ENCODE measurements at regions of chr11 and their contacts with region 1.

Region 1: DNA sequence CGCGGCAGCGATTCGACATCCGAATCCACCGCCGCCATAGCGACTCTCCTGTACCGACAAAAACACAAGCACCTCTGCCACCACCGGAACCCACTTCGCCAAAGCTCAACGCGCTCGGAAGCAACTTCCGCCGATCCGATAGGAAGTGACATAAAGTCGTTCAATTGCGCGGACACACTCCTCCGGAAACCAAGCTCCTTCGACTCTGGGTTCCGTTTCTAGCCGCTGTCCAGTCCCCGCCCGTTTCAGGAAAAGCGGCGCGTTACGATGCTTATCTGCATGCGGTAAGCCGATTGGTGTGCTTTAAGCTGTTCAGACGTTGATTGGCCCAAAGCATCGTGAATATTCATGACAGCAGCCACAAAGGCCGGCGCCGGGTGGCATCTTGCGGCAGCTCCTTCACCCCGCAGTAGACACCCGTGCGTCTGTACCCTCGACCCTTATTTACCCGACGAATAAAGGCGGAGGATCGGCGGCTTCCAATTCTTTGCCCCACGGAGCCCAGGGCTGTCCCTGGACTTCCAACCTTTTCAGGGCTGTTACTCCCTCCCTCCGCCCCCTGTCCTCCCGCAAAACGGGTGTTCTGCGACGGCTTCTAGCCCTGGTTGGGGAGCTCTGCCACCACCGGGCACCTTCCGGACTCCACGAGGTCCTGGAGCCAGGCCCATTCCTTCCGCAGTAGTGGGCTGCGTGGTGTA is at the start of gene TUT1:
- DNase-seq: peak; percentile 91
- CTCF ChIP-seq: no peak

Region 2: DNA sequence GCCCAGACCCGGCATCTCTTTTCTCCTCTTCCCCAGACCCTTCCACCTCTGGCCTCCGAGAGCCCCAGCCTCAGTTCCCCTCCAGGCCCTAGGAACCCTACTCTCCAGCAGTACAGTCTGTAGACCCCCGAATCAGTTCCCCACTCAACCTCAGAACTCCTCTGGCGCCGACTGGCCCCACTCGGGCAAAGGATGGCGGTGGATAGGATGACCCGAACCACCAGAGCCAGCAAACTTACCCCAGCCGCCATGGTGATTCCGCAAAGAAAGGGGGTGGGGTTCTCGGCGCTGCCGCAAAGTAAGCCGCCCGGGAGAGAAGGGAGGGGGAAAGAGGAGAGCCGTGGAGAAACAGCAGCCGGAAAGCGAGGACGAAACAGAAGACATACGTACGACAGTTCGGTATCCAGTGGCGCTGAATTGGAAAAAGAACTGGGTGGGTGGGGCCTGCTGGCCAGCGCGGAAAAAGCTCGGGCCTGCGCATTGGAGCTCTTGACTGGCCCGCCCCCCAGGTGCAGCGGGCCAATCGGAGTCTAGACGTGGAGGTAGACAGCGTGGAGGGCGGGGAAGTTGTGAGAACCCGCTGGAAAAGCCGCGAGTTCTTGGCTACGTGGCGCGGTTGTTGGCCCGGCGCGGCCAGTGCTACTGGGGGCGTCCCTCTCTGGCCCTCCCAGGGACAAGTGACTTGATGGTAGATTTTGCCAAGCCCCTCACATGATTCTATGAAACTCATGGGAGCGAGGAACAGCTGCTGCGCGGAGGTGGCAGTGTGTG is 17.8 kb before region 1 on chr11 and contains the start of gene EEF1G:
- CTCF ChIA-PET with region 1: interaction called, 7 read pairs
- POLR2A ChIA-PET with region 1: interaction called, 87 read pairs
- DNase-seq: peak; percentile 99
- CTCF ChIP-seq: no peak

Region 3: DNA sequence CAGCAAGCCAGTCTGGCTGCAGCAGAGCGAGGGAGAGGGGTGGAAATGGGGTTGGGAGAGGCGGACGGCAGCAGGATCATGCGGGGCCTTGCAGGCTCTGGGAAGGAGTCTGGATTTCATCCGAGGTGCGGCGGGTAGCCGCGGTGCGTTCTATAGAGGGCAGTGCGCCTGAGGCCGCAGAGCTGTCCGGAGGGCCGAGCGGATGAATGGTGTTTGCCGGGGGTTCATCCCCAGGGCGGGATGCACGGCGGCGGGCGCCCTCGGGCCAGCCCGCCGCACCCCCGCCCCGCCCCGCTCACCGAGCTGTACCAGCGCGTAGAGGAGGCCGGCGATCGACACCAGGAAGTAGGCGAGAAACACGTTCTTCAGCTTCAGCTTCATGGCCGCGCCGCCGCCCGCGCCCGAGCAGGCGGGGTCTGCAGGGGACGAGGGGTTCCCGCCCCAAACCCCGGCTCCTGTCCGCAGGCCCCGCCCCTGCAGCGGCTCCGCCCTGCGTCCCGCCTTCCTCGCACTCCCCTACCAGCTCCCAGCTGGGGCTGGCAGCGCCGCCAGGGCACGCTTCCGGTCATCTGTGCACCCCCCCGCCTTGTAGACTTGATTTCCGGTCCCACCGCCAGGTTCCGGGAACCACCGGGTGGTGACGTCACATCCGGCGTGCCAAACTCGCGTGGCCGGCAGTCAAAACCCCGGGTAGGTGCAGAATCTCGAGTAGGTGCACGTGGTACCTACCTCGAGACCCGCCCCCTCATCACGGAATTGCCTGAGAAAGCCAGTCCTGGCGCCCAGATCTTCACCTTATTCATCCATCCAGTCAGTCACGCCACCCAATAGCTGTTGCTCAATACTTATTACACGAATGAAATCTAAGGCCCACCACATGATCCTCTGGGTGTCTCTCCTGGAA is 30.2 kb after region 1 on chr11 and contains the start of gene B3GAT3:
- CTCF ChIA-PET with region 1: interaction called, 4 read pairs
- POLR2A ChIA-PET with region 1: interaction called, 14 read pairs
- DNase-seq: peak; percentile 98
- CTCF ChIP-seq: no peak

Region 4: DNA sequence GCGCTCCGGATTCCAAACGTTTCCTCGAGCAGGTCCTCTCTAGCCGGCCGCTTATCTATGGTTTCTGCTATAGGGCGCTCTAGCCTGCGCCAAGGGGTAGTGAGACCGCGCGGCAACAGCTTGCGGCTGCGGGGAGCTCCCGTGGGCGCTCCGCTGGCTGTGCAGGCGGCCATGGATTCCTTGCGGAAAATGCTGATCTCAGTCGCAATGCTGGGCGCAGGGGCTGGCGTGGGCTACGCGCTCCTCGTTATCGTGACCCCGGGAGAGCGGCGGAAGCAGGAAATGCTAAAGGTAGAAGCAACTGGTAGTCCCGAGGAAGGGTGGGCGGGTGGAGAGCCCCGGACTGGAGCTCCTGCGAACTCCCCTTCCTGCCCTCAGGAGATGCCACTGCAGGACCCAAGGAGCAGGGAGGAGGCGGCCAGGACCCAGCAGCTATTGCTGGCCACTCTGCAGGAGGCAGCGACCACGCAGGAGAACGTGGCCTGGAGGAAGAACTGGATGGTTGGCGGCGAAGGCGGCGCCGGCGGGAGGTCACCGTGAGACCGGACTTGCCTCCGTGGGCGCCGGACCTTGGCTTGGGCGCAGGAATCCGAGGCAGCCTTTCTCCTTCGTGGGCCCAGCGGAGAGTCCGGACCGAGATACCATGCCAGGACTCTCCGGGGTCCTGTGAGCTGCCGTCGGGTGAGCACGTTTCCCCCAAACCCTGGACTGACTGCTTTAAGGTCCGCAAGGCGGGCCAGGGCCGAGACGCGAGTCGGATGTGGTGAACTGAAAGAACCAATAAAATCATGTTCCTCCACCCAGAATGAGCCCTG is 80.2 kb after region 1 on chr11 and contains the starts of genes LBHD1 and UQCC3:
- CTCF ChIA-PET with region 1: no interaction called
- POLR2A ChIA-PET with region 1: interaction called, 50 read pairs
- DNase-seq: peak; percentile 86
- CTCF ChIP-seq: no peak

Region 5: DNA sequence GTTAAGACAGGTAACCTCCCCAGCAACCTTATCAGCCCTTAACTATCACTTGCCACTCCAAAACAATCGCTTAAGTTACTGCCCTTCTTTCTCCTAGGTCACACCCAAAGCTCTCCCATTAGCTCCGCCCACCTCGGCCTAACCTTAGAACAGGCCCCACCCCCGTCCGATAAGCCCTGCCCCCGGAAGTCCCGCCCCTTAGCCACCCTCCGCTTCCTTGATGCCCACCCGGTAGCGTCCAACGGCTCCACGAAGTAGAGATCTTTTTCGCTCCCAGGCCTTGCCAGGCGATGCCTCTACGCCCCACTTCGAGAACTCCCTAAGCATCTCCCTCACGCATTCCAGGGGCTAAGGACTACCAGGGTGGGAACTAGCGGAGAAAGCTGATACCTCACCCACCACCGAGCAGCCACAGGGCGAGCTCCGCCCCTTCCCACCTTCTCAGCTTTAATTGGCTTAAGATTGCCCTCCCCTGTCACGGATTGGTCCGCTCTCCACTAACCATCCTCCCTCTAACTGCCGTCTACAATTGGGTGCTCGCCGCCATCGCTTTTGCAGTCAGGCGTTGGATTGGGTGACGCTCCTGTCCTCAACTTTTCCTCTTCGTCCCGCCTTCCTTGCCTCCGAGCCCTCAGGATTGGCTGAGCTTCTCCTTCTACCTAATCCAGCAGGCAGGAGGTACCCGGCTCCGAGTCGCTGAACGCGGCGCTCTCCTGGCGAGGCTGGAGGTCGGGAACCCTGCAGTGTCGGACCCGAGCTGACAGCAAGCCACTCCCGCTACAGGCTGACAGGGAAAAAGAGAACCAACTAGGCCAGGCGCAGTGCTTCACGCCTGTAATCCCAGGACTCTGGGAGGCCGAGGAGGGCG is 162.4 kb after region 1 on chr11 and contains the start of gene ZBTB3:
- CTCF ChIA-PET with region 1: interaction called, 3 read pairs
- POLR2A ChIA-PET with region 1: interaction called, 16 read pairs
- DNase-seq: peak; percentile 96
- CTCF ChIP-seq: no peak